CD4-positive, alpha-beta T cell (primary cell): ENCODE measurements at regions of chr6 and their contacts with region 1.

Region 1: DNA sequence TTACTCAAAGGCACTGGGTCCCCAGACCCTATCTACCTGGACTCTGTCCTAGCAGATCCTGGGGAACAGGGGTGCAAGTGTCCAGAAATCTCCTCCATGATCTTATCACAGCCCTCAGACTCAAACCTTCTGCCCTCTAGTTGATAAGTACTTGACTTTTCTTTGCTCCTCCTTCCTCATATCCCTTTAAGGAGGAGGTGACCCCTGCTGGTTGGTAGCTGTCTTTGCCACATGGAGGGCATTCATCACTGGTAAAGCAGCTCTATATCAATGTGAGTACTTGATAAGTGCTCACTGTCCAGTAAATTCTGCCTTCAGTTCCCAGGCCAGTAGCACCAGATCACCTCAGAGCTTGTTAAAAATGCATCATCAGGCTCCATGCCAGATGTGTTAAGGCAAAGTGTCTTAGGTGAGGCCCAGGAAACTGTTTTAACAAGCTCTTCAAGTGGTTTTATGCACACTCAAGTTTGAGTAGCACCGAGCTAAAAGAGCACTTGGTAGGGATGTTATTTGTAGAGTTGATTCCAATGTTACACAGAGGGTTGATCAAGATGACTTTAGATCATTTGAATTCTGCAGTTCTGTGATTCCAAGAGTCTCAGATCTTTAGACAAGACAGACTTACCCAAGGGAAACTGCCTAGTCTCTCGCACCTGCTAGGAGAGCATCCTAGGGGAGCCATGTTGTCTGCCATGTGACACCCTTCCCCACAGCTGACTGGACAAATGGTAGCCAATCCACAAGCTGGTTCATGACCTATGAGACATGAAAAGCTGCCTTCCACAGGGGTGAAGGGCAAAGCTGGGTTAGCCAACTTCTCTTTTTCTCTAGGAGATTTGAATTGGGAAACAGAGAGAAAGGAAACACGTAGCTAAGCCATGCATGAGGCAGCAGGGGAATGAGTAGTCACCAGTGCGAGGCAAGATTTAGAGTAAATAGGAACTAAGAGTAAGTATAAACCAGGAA is 18.6 kb downstream of the TREML2 start:
- DNase-seq: peak; percentile 30 to 78 (median 40)
- ATAC-seq: peak; percentile 98
- H3K4me3 ChIP-seq: no peak overlapping the region
- H3K4me3 Mint-ChIP-seq: no peak overlapping the region
- H3K27ac ChIP-seq: no peak overlapping the region
- H3K27ac Mint-ChIP-seq: no peak overlapping the region
- H3K4me1 ChIP-seq: peaks cover 31% of the 10 kb centered on the region
- H3K4me1 Mint-ChIP-seq: peaks cover 20% of the 10 kb centered on the region
- H3K27me3 ChIP-seq: no peaks in the 10 kb centered on the region
- H3K27me3 Mint-ChIP-seq: no peaks in the 10 kb centered on the region
- CTCF ChIP-seq: peak; percentile 63

Region 2: DNA sequence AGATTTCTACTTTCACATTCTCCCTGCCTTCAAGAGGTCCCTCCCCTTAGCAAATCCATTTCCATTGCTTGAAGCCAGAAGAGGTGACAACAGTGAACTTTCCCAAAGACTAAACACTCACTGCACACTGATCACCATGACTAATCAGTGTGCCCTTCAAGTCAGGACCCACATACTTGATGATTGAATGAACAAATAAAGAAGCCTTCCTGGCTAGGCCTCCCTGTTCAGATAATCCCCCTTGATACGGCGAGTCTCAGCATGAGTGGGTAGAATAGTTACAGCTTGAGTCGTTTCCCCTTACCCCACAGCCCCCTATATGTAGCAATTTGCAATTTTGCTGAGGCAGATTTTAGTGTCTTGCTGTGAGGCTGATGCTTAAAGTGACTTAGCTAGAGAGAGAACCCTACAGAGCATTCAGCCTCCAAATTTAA is 245.5 kb before region 1 on chr6:
- CTCF ChIA-PET with region 1: no interaction called
- POLR2A ChIA-PET with region 1: no interaction called
- intact Hi-C with region 1: no loop called
- DNase-seq: no peak
- ATAC-seq: no peak
- H3K4me3 ChIP-seq: no peak overlapping the region
- H3K4me3 Mint-ChIP-seq: no peak overlapping the region
- H3K27ac ChIP-seq: no peak overlapping the region
- H3K27ac Mint-ChIP-seq: no peak overlapping the region
- H3K4me1 ChIP-seq: no peaks in the 10 kb centered on the region
- H3K4me1 Mint-ChIP-seq: no peaks in the 10 kb centered on the region
- H3K27me3 ChIP-seq: peaks cover 4 to 5% of the 10 kb centered on the region in 2 experiments
- H3K27me3 Mint-ChIP-seq: peaks cover 23% of the 10 kb centered on the region
- CTCF ChIP-seq: no peak

Region 3: GRCh38 chr6:41000248-41000647 is 182.1 kb before region 1 on chr6:
- CTCF ChIA-PET with region 1: no interaction called
- POLR2A ChIA-PET with region 1: no interaction called
- intact Hi-C with region 1: loop called in 1 of 2 experiments (anchors 5 kb)
- DNase-seq: no peak
- ATAC-seq: no peak
- H3K4me3 ChIP-seq: no peak overlapping the region
- H3K4me3 Mint-ChIP-seq: no peak overlapping the region
- H3K27ac ChIP-seq: no peak overlapping the region
- H3K27ac Mint-ChIP-seq: no peak overlapping the region
- H3K4me1 ChIP-seq: no peaks in the 10 kb centered on the region
- H3K4me1 Mint-ChIP-seq: no peaks in the 10 kb centered on the region
- H3K27me3 ChIP-seq: peaks cover 4 to 14% of the 10 kb centered on the region in 2 experiments
- H3K27me3 Mint-ChIP-seq: peaks cover 30% of the 10 kb centered on the region
- CTCF ChIP-seq: no peak

Region 4: GRCh38 chr6:41072676-41073623 is 109.4 kb before region 1 on chr6 and contains the start of gene NFYA:
- CTCF ChIA-PET with region 1: interaction called, 4 read pairs
- POLR2A ChIA-PET with region 1: interaction called, 5 read pairs
- intact Hi-C with region 1: loop called in 1 of 2 experiments (anchors 5 kb)
- DNase-seq: peak in 13 of 14 experiments; percentile 100
- ATAC-seq: peak; percentile 62
- H3K4me3 ChIP-seq: peak within 1 kb of the TSS; percentile 70
- H3K4me3 Mint-ChIP-seq: peak within 1 kb of the TSS; percentile 93
- H3K27ac ChIP-seq: peak within 1 kb of the TSS; percentile 95 to 96
- H3K27ac Mint-ChIP-seq: peak within 1 kb of the TSS; percentile 88
- H3K4me1 ChIP-seq: peaks cover 23% of the 10 kb centered on the region
- H3K4me1 Mint-ChIP-seq: peaks cover 51% of the 10 kb centered on the region
- H3K27me3 ChIP-seq: no peaks in the 10 kb centered on the region
- H3K27me3 Mint-ChIP-seq: no peaks in the 10 kb centered on the region
- CTCF ChIP-seq: peak; percentile 33
- total RNA-seq, gene NFYA: 26.7 to 27.3 TPM

Region 5: GRCh38 chr6:41092421-41093140 is 89.8 kb before region 1 on chr6:
- CTCF ChIA-PET with region 1: interaction called, 3 read pairs
- POLR2A ChIA-PET with region 1: no interaction called
- intact Hi-C with region 1: loop called in 1 of 2 experiments (anchors 5 kb)
- DNase-seq: peak in 3 of 14 experiments; percentile 14 to 28 (median 27)
- ATAC-seq: no peak
- H3K4me3 ChIP-seq: no peak overlapping the region
- H3K4me3 Mint-ChIP-seq: no peak overlapping the region
- H3K27ac ChIP-seq: no peak overlapping the region
- H3K27ac Mint-ChIP-seq: no peak overlapping the region
- H3K4me1 ChIP-seq: no peaks in the 10 kb centered on the region
- H3K4me1 Mint-ChIP-seq: peaks cover 6% of the 10 kb centered on the region
- H3K27me3 ChIP-seq: no peaks in the 10 kb centered on the region
- H3K27me3 Mint-ChIP-seq: no peaks in the 10 kb centered on the region
- CTCF ChIP-seq: peak; percentile 11

Region 6: GRCh38 chr6:41200296-41200900 is 18.0 kb after region 1 on chr6:
- CTCF ChIA-PET with region 1: no interaction called
- POLR2A ChIA-PET with region 1: interaction called, 12 read pairs
- intact Hi-C with region 1: no loop called
- DNase-seq: peak; percentile 14 to 93 (median 50)
- ATAC-seq: peak; percentile 82
- H3K4me3 ChIP-seq: peak overlapping the region; percentile 34
- H3K4me3 Mint-ChIP-seq: peak overlapping the region; percentile 81
- H3K27ac ChIP-seq: peak overlapping the region; percentile 85 to 96
- H3K27ac Mint-ChIP-seq: peak overlapping the region; percentile 100
- H3K4me1 ChIP-seq: peaks cover 56% of the 10 kb centered on the region
- H3K4me1 Mint-ChIP-seq: peaks cover 79% of the 10 kb centered on the region
- H3K27me3 ChIP-seq: no peaks in the 10 kb centered on the region
- H3K27me3 Mint-ChIP-seq: no peaks in the 10 kb centered on the region
- CTCF ChIP-seq: no peak

Region 7: DNA sequence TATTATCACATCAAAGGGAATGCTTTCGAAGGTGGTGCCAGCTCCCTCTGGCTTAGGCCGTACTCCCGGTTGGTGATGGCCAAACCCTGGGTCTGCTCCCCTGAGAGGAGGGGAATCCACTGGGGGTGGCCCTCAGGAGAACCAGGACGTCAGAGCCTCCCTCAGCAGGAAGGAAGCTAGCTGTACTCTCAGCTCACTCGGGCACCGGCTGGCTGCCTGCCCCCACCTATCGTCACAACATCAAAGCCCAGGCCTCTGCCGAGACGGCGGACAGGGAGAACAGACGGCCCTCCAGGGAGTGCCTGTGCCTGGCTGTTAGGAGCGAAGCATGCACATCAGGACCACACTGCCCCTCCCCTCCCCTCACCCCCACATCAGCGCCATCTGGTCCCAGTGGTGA is 574.0 kb after region 1 on chr6:
- CTCF ChIA-PET with region 1: no interaction called
- POLR2A ChIA-PET with region 1: no interaction called
- intact Hi-C with region 1: no loop called
- DNase-seq: no peak
- ATAC-seq: no peak
- H3K4me3 ChIP-seq: no peak overlapping the region
- H3K4me3 Mint-ChIP-seq: no peak overlapping the region
- H3K27ac ChIP-seq: no peak overlapping the region
- H3K27ac Mint-ChIP-seq: no peak overlapping the region
- H3K4me1 ChIP-seq: no peaks in the 10 kb centered on the region
- H3K4me1 Mint-ChIP-seq: no peaks in the 10 kb centered on the region
- H3K27me3 ChIP-seq: no peaks in the 10 kb centered on the region
- H3K27me3 Mint-ChIP-seq: no peaks in the 10 kb centered on the region
- CTCF ChIP-seq: no peak